Right cardiac atrium (tissue), 5 donors: ENCODE measurements at regions of chr22 and their contacts with region 1.

Region 1: GRCh38 chr22:42662114-42663021 is 13.2 kb upstream of the CYB5R3 start:
- DNase-seq: peak; percentile 88 to 96 (median 93)
- ATAC-seq: peak; percentile 93 to 94
- H3K4me3 ChIP-seq: peak overlapping the region; percentile 51
- H3K27ac ChIP-seq: no peak overlapping the region
- H3K4me1 ChIP-seq: no peaks in the 10 kb centered on the region
- H3K27me3 ChIP-seq: no peaks in the 10 kb centered on the region

Region 2: GRCh38 chr22:42720263-42721044 is 58.1 kb after region 1 on chr22 and contains the start of gene A4GALT:
- intact Hi-C with region 1: loop called in 1 of 4 experiments (anchors 10 kb)
- DNase-seq: peak; percentile 43 to 82 (median 80)
- ATAC-seq: peak; percentile 71 to 75
- H3K4me3 ChIP-seq: peak within 1 kb of the TSS; percentile 92
- H3K27ac ChIP-seq: peak within 1 kb of the TSS; percentile 84
- H3K4me1 ChIP-seq: peaks cover 12% of the 10 kb centered on the region
- H3K27me3 ChIP-seq: no peaks in the 10 kb centered on the region
- total RNA-seq, gene A4GALT: 74.3 to 103 (median 86.8) TPM

Region 3: DNA sequence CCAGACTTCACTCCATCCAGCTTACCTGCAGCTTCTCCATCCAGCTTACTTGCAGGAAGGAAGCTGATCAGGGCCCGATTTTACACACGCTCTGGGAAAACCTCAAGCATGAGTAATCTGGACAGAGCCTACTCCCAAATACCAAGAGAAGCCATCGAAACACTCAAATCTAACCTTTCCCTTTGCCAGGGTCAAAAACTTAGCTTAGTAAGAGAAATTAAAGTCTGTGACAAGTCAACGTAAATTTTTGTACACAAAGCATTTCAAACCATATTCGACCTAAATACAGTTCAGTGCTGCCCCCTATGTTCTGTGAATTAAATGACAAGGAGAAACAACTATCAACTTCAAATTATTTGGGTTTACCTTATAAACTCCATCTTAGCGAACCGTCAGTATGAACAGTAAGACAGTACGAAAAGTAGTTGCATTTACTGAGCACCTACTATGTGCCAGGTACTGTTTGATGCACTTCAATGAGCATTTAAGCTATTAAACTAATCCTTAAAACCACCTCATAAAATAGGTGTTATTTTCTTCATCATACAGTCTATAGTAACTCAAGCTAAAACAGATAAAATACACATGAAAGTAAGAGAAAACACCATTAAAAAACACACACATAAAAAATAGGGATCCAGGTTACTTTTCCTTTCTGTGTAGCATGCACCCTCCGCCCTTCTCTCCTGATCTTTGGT is 157.8 kb after region 1 on chr22:
- intact Hi-C with region 1: loop called in 1 of 4 experiments (anchors 5 kb)
- DNase-seq: no peak
- ATAC-seq: peak in 1 of 2 donors; percentile 53
- H3K4me3 ChIP-seq: no peak overlapping the region
- H3K27ac ChIP-seq: no peak overlapping the region
- H3K4me1 ChIP-seq: no peaks in the 10 kb centered on the region
- H3K27me3 ChIP-seq: no peaks in the 10 kb centered on the region